AG04449 (cell line): ENCODE measurements at regions of chr15 and their contacts with region 1.

Region 1: DNA sequence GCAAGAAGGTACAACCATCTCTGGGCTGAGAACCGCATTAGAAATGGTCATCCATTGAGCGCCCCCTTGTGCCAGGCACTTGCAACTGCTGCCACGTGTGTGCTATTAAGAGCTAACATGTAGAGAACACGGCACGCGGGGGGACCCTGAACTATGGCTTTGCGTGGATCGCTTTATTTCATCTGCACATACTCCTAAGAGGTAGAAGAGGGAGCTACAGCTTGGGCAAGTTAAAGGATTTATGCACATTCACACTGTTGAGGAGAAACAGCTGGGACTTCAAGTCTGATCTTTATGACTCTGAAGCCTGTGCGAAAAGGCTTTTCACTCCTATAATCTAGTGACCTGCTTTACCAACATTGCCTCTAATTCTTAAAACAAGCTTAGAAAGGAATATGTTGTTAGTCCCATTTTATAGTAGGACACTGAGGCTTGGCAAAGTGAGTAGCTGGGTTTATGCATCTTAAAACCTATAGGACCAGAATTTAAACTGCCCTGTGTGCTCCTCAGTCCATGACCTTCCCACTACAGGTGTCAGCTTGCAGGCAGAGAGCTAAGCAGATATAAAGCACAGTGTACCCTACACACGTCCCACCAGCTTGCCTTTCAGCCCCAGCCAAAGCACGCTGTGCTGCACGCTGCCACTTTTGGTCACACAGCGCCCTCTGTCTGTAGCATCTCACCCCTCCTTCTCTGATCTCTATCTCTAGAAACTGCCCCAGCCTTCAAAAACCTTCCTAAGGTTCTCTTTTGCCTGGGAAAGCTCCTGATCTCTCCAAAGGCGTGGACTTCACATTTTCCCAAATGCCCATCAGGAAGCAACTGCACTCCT is 57.8 kb downstream of the STARD5 start:
- DNase-seq: no peak
- H3K4me3 ChIP-seq: peak overlapping the region; percentile 23
- CTCF ChIP-seq: peak; percentile 89

Region 2: DNA sequence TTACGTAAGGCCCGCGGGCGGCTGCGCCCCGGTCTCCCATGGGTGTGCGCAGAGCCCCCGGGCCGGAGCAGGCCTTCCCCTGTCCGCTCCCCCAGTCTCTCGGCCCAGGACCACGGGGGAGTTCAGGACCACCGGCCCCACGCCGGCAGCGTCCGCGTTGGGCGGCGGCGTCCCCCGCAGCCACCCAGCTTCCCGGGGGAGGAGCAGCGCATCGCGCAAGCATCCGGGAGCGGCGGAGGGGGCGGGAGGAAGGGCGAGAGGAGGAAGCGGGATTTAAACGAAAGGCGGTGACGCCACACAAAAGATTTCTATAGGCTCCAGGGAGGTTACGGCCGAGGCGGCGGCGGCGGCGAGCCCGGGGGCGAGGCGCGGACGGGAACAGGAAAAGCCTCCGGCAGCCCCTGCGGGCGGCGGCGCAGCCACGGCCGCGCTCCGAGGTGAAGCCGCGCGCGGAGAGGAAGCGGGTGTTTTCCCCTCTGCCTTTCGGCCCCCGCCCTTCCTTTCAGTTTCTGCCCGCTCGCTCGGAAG is 265.5 kb before region 1 on chr15 and contains the start of gene TLNRD1:
- CTCF ChIA-PET with region 1: interaction called, 36 read pairs
- POLR2A ChIA-PET with region 1: no interaction called
- DNase-seq: peak; percentile 38
- H3K4me3 ChIP-seq: peak within 1 kb of the TSS; percentile 83
- CTCF ChIP-seq: no peak

Region 3: DNA sequence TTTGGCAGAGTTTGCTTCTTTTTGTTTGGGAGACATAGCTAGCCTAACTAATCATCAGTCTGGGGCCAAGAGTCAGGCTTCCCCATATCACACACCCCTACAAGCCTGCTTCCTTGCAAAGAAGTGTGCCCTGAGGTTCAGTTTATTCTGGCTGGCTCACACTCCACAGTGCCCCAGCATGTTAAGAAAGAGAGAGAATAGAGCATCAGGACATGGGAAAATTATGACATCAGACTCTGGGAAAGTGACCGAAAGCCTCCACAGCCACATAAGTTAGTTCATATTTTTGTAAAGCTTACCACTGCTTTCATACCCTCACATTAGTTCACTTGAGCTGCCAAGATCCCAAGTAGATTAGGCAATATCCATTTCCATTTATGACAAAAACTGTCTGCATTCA is 195.0 kb before region 1 on chr15:
- CTCF ChIA-PET with region 1: no interaction called
- POLR2A ChIA-PET with region 1: no interaction called
- DNase-seq: peak; percentile 23
- H3K4me3 ChIP-seq: no peak overlapping the region
- CTCF ChIP-seq: no peak

Region 4: GRCh38 chr15:81091889-81092558 is 174.1 kb before region 1 on chr15:
- CTCF ChIA-PET with region 1: interaction called, 1,118 read pairs
- POLR2A ChIA-PET with region 1: no interaction called
- DNase-seq: peak; percentile 86
- H3K4me3 ChIP-seq: peak overlapping the region; percentile 9
- CTCF ChIP-seq: no peak

Region 5: DNA sequence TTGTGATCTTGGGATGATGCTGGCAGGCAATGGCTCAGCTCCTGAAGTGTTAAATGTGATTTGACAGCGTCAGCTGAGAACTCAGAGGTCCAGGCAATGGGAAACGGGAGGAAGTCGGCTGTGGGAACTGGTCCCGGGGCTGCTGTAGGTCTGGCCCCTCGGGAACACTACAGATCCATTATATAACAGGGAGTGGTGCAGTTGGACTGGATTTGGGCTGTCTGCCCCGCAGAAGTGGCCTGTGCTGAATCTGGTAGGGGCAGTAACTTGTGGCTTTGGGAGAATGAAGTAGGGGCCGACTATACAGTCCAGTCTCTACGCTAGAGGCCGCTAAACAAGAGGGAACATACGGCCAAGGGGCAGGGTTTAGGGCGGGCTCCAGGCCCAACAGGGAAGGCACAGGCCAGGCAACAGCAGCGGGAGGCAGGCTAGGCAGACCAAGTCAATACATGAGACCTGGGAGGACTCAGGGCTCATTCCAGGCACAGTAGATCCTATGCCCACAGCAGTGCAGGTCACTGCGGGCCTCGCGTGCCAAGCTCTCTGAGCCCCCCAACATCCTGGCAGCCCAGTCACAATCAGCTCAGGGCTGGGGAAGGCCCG is 89.8 kb before region 1 on chr15:
- CTCF ChIA-PET with region 1: interaction called, 26 read pairs
- POLR2A ChIA-PET with region 1: no interaction called
- DNase-seq: no peak
- H3K4me3 ChIP-seq: no peak overlapping the region
- CTCF ChIP-seq: no peak

Region 6: DNA sequence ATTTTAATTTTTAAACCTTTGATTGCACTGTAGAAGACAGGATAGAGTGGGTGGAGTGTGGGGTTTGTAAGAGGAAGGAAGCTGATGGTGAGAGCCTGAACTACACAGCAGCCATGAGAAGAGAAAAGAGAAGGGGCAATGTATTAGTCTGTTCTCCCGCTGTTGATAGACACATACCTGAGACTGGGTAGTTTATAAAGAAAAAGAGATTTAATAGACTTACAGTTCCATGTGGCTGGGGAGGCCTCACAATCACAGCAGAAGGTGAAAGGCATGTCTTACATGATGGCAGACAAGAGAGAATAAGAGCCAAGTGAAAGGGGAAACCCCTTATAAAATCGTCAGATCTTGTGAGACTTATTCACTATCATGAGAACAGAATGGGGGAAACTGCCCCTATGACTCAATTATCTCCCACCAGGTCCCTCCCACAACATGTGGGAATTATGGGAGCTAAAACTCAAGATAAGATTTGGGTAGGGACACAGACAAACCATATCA is 20.5 kb after region 1 on chr15:
- CTCF ChIA-PET with region 1: interaction called, 91 read pairs
- POLR2A ChIA-PET with region 1: no interaction called
- DNase-seq: no peak
- H3K4me3 ChIP-seq: no peak overlapping the region
- CTCF ChIP-seq: no peak

Region 7: GRCh38 chr15:81394603-81395002 is 128.4 kb after region 1 on chr15:
- CTCF ChIA-PET with region 1: interaction called, 517 read pairs
- POLR2A ChIA-PET with region 1: no interaction called
- DNase-seq: no peak
- H3K4me3 ChIP-seq: no peak overlapping the region
- CTCF ChIP-seq: no peak